ENCODE measurements at regions of chr17 and their contacts with region 1.

Region 1: DNA sequence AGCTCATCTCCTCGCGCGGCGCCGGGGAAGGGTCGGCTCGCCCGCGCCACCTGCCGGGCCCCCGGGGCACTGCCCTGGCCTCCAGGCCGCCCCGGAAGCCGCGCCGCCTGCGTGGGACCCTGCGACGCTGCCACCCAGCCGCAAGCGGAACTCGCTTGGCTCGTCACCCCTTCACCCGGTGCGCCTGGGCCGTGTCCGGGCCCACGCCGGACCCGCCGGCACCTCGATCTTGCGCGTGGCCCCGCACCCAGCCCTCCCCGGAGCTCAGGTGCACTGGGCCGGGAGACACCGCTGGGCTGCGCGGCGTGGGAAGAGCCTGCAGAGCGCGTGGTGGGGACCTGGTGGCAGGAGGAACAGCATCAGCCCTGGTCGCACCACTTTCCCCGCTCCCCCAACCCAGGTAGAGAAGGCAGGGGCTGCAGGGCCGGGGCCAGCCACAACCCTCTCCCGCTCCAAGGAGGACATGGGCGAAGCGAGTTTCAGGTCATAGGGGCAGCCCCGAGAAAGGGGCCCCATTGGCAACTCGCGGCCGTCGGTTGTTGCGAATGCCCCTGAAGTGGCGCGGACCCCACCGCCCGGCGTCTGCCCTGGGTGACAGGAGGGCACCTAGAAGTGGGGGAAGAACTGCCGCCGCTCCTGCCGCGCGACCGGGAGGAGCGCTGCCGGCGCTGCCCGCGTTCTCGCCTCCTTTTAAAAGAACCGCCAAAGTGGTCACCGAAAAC is 363 bp upstream of the MIF4GD start:
- DNase-seq: peak; percentile 87 to 91
- ATAC-seq: peak; percentile 78 to 82 (median 80)
- H3K4me3 ChIP-seq: peak overlapping the region; percentile 77
- H3K27ac ChIP-seq: peak overlapping the region; percentile 97
- H3K4me1 ChIP-seq: peaks cover 22% of the 10 kb centered on the region
- H3K27me3 ChIP-seq: no peaks in the 10 kb centered on the region
- CTCF ChIP-seq: peak; percentile 86

Region 2: DNA sequence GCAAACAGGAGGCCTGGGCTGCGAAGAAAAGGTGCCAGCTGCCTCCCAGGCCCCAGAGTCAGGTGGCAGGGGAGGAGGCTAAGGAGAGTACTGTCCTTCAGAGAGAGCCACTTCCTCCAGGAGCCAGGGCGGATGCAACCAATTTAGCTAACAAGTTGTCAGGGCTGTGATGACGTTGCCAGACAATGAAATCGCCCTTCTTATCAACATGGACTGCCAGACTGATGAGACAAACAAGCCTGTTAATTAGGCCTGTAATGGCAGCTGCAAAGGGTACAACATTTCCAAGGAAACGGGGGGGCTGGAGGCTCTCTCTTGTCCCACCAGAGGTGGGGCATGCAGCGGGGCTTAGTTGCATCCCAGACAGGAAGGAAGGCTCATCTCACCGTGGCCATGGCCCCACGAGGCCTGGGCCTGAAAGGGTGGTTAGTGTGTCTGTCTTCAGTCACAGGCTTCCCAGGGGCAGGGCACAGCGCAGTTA is 1738.9 kb before region 1 on chr17:
- intact Hi-C with region 1: no loop called
- DNase-seq: no peak
- ATAC-seq: no peak
- H3K4me3 ChIP-seq: no peak overlapping the region
- H3K27ac ChIP-seq: no peak overlapping the region
- H3K4me1 ChIP-seq: no peaks in the 10 kb centered on the region
- H3K27me3 ChIP-seq: peaks cover 0 to 3% (median 0%) of the 10 kb centered on the region in 3 donors
- CTCF ChIP-seq: no peak

Region 3: DNA sequence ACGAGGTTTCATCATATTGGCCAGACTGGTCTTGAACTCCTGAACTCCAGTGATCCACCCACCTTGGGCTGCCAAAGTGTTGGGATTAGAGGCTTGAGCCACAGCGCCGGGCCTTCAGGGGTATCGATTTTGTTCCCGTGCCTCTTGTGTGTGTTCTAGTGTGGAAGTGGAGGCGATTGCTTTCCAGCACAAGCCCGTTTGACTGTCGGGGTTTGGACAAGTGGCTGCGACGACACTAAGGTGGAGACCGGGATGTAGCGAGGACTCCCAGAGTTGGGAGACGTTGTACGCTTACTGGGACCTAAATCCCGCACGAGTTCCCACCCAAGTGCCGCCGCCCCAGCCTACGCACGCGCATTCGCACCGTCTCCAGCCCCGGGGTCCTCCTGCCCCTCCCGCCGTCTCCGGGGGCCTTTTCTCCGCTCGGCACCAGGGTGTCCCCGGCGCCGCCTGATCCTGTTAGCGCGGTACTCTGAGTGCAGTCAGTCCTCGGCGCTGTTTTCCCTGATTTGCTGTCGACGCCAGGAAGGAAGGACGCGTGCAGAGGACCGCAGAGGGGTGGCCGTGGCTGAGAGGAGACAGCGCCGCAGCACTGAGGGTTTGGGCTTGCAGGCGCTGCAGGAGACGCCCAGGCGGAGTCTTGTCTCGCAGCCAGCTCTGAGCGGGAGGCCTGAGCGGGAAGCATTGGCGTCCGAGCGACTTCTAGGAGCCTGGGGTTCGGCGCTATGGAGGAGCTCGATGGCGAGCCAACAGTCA is 66.2 kb before region 1 on chr17 and contains the start of gene NUP85:
- intact Hi-C with region 1: loop called in 1 of 2 experiments (anchors 5 kb)
- DNase-seq: peak; percentile 95 to 98
- ATAC-seq: peak; percentile 95 to 97 (median 96)
- H3K4me3 ChIP-seq: peak within 1 kb of the TSS; percentile 98
- H3K27ac ChIP-seq: peak within 1 kb of the TSS; percentile 96
- H3K4me1 ChIP-seq: peaks cover 14% of the 10 kb centered on the region
- H3K27me3 ChIP-seq: no peaks in the 10 kb centered on the region
- CTCF ChIP-seq: no peak
- total RNA-seq, gene NUP85: 19.3 to 32.9 (median 22.0) TPM